Tibial artery (tissue), 4 donors: ENCODE measurements at regions of chr3 and their contacts with region 1.

Region 1: GRCh38 chr3:171646357-171647133 is 163.7 kb downstream of the PLD1 start:
- DNase-seq: no peak
- H3K4me3 ChIP-seq: no peak overlapping the region
- H3K27ac ChIP-seq: peak overlapping the region; percentile 3 to 34
- H3K4me1 ChIP-seq: peaks cover 0 to 30% (median 3%) of the 10 kb centered on the region in 4 donors
- H3K27me3 ChIP-seq: no peaks in the 10 kb centered on the region
- CTCF ChIP-seq: peak; percentile 68 to 82

Region 2: DNA sequence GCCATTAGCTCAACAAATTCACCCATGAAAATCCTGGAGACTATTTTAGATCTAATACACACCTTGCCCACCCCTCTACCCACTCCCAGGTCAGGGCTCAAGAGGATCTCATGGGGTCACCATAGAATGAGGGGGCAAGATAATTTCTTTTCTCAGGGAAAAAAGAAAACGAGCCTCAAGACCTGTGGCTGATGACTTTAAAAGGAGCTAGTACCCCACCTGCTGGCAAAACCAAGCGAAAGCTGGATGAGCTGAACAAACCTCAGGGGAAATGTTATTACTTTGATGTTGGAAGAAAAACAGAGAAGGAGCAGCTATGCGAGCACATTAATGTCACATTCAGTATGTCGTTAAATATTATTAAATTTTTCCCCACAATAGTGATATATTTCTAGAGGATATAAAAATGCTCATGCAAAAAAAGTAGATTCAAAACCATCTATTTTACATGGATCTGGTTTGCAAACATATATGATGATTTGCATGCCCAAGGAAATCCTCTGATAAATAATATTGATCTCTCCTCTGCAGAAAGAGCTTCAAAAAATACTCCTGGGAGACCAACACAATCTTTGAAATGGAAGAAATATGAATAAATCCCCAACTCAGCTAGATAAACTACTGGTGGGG is 126.0 kb after region 1 on chr3:
- intact Hi-C with region 1: loop called (anchors 2 kb)
- DNase-seq: peak in 1 of 2 donors; percentile 59
- H3K4me3 ChIP-seq: no peak overlapping the region
- H3K27ac ChIP-seq: peak overlapping the region; percentile 74 to 80
- H3K4me1 ChIP-seq: peaks cover 0 to 32% (median 18%) of the 10 kb centered on the region in 4 donors
- H3K27me3 ChIP-seq: no peaks in the 10 kb centered on the region
- CTCF ChIP-seq: peak; percentile 67 to 78

Region 3: DNA sequence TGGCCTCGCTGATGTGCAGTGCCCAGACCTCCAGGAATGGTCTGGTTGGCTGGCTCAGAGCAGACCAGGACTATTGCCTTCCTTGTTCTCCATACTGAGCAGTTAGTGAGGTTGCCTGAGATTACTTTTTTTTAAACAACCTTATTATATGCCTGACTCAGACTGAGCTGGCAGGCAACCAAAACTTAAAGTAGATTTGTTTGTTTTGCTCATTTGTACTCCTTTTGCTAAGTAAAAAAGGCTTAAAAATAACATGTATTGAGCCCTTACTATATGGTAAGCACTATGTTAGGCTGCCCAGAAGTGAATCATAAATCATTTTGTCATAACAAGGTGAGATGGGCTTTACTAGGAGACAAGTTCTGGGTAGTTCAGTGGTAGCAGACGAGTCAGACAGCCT is 709.3 kb after region 1 on chr3:
- intact Hi-C with region 1: loop called (anchors 10 kb)
- DNase-seq: no peak
- H3K4me3 ChIP-seq: no peak overlapping the region
- H3K27ac ChIP-seq: peak overlapping the region; percentile 29 to 47
- H3K4me1 ChIP-seq: peaks cover 0 to 33% (median 19%) of the 10 kb centered on the region in 4 donors
- H3K27me3 ChIP-seq: no peaks in the 10 kb centered on the region
- CTCF ChIP-seq: no peak